ENCODE measurements at regions of chr5 and their contacts with region 1.

Region 1: DNA sequence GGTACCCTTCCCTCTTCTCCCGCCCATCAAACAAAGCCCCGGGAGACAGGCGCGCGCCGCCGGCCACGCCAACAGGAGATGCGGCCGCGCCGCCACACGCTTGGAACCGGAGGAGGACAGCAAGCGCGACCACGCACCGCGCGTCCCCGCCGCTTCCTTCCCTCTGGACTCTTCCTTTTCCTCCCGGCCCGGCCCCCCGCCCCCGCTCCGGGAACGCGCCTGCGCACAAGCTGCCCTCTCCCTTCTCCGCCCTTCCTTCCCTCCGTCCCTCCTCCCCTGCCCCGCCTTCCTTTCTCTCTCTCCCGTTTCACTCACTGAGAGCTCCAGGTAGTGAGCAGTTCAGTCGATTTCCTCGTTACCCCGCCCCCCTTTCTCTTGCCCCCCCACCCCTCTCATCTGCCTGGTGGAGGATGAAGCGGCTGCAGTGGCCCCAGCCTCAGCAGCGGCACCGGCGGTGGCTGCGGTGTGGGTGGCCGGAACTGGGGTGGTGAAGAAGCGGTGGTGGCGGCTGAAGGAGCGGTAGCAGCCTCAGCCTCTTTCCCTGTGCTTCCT is at the start of gene RASA1:
- DNase-seq: peak; percentile 95 to 98
- ATAC-seq: peak; percentile 97 to 99 (median 98)
- H3K4me3 ChIP-seq: peak within 1 kb of the TSS; percentile 92
- H3K27ac ChIP-seq: peak within 1 kb of the TSS; percentile 86
- H3K4me1 ChIP-seq: peaks cover 11% of the 10 kb centered on the region
- H3K27me3 ChIP-seq: no peaks in the 10 kb centered on the region
- CTCF ChIP-seq: no peak
- total RNA-seq, gene RASA1: 10.2 to 16.8 (median 12.9) TPM

Region 2: GRCh38 chr5:86617756-86618576 is 649.7 kb before region 1 on chr5 and contains the start of gene COX7C:
- intact Hi-C with region 1: loop called in 1 of 2 experiments (anchors 10 kb)
- DNase-seq: peak; percentile 86 to 90
- ATAC-seq: peak; percentile 98 to 99 (median 99)
- H3K4me3 ChIP-seq: peak within 1 kb of the TSS; percentile 96
- H3K27ac ChIP-seq: peak within 1 kb of the TSS; percentile 90
- H3K4me1 ChIP-seq: peaks cover 7% of the 10 kb centered on the region
- H3K27me3 ChIP-seq: peaks cover 0 to 6% (median 3%) of the 10 kb centered on the region in 3 donors
- CTCF ChIP-seq: no peak
- total RNA-seq, gene COX7C: 865 to 1,220 (median 1,102) TPM

Region 3: GRCh38 chr5:87231037-87231819 is 36.4 kb before region 1 on chr5:
- intact Hi-C with region 1: loop called in 1 of 2 experiments (anchors 2 kb)
- DNase-seq: no peak
- ATAC-seq: no peak
- H3K4me3 ChIP-seq: no peak overlapping the region
- H3K27ac ChIP-seq: no peak overlapping the region
- H3K4me1 ChIP-seq: no peaks in the 10 kb centered on the region
- H3K27me3 ChIP-seq: peaks cover 0 to 1% (median 0%) of the 10 kb centered on the region in 3 donors
- CTCF ChIP-seq: no peak

Region 4: DNA sequence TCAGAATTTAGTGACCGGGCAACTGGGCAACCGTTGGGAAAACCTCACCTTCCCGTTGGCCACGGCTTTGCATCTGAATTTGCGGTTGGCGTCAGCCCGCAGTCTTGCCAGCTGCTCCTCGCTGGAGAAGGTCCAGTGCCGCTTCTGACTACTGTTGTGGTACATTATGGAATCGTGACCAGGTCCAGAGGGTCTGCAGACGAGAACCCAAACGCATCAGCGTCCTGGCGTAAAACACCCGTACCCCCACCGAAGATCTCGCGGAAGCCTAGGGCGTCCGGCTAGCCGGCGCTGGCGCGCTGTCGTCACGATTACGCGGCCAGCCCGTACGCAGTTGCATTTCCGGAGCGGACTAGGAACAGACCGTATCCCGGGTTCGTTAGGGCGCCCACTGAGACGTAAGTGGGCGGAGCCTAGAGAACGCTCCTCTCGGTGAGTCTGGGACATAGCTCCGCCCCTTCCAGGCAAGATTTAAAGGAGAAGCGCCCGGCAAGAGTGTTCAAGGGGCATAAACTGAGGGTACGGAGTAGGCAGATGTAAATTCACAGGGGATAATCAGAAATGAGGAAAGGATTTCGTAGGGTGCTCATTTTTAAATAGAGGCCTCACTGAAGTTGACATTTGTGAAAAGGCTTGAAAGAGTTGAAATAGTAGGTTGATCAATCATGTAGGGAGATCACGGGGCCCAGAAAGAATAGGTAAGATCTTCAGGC is 145.1 kb after region 1 on chr5 and contains the start of gene CCNH:
- intact Hi-C with region 1: loop called in 1 of 2 experiments (anchors 5 kb)
- DNase-seq: peak; percentile 98
- ATAC-seq: peak; percentile 97 to 99 (median 98)
- H3K4me3 ChIP-seq: peak within 1 kb of the TSS; percentile 91
- H3K27ac ChIP-seq: peak within 1 kb of the TSS; percentile 98
- H3K4me1 ChIP-seq: peaks cover 20% of the 10 kb centered on the region
- H3K27me3 ChIP-seq: no peaks in the 10 kb centered on the region
- CTCF ChIP-seq: no peak
- total RNA-seq, gene CCNH: 19.9 to 41.9 (median 31.4) TPM

Measured in psoas muscle (tissue), 8 donors.